Endothelial cell of umbilical vein (primary cell): ENCODE measurements at regions of chr10 and their contacts with region 1.

Region 1: DNA sequence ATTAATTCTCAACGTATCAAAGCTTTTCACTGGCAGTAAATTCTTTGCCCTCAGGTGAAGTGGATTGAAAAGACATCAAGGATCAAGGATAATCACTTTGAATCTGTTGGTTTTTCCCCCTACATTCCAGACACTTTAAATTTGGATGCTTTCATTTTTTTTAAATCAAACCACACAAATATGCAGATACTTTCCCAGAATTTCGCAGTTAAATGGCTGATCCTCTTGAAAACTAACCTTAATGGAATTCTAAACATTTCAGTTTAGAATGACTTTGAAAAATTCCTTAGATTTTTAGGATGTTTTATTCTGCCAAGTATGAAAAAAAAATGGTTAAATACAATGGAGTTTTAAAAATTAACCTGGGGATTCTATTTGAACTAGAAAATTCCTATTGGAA is 325.9 kb downstream of the GFRA1 start:
- DNase-seq: no peak
- H3K4me3 ChIP-seq: no peak overlapping the region
- H3K27ac ChIP-seq: no peak overlapping the region
- H3K4me1 ChIP-seq: peaks cover 23% of the 10 kb centered on the region
- H3K27me3 ChIP-seq: no peaks in the 10 kb centered on the region
- CTCF ChIP-seq: no peak
- POLR2A ChIP-seq: no peak

Region 2: GRCh38 chr10:116272440-116273283 is 325.6 kb after region 1 on chr10 and contains the start of gene GFRA1:
- CTCF ChIA-PET with region 1: no interaction called
- POLR2A ChIA-PET with region 1: no interaction called
- dilution Hi-C with region 1: no loop called
- intact Hi-C with region 1: loop called (anchors 5 kb)
- DNase-seq: no peak
- H3K4me3 ChIP-seq: peak within 1 kb of the TSS in 1 of 3 experiments; percentile 4
- H3K27ac ChIP-seq: no peak within 1 kb of the TSS
- H3K4me1 ChIP-seq: peaks cover 11% of the 10 kb centered on the region
- H3K27me3 ChIP-seq: peaks cover 47 to 64% of the 10 kb centered on the region in 2 experiments
- CTCF ChIP-seq: no peak
- POLR2A ChIP-seq: no peak
- total RNA-seq, gene GFRA1: 0.88 and 0.95 TPM in 2 replicates

Region 3: DNA sequence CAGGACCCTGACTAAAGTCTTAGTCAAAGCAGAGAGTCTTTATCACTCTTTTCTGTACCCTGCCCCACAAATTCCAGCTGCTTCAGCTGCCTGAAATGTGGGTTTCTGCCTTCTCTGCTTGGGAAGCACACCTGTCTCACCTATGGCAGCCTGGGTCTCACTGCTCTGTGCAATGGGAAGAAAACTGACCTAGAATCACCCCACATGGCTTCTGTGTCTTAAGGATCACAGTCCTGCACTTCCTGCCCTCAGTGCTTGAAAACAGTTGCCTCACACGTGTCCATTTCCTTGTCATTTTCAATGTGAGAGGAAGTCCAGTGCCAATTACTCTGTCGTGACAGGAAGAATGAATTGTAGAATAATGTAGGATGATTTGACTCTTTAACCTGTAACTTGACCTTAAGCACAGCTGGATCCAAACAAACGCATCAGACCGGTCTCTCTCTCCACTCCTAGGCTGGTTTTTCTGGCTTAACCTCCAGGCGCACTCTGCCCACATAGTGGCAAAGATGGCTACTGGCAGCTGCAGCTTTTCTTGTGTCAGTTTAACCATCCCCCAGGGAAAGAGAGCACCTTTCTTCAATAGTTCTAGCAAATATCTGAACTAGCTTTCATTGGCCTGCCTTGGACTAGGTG is 451.0 kb after region 1 on chr10:
- CTCF ChIA-PET with region 1: no interaction called
- POLR2A ChIA-PET with region 1: no interaction called
- dilution Hi-C with region 1: no loop called
- intact Hi-C with region 1: no loop called
- DNase-seq: no peak
- H3K4me3 ChIP-seq: no peak overlapping the region
- H3K27ac ChIP-seq: no peak overlapping the region
- H3K4me1 ChIP-seq: no peaks in the 10 kb centered on the region
- H3K27me3 ChIP-seq: no peaks in the 10 kb centered on the region
- CTCF ChIP-seq: no peak
- POLR2A ChIP-seq: no peak